Naive thymus-derived CD4-positive, alpha-beta T cell (primary cell): ENCODE measurements at regions of chr6 and their contacts with region 1.

Region 1: DNA sequence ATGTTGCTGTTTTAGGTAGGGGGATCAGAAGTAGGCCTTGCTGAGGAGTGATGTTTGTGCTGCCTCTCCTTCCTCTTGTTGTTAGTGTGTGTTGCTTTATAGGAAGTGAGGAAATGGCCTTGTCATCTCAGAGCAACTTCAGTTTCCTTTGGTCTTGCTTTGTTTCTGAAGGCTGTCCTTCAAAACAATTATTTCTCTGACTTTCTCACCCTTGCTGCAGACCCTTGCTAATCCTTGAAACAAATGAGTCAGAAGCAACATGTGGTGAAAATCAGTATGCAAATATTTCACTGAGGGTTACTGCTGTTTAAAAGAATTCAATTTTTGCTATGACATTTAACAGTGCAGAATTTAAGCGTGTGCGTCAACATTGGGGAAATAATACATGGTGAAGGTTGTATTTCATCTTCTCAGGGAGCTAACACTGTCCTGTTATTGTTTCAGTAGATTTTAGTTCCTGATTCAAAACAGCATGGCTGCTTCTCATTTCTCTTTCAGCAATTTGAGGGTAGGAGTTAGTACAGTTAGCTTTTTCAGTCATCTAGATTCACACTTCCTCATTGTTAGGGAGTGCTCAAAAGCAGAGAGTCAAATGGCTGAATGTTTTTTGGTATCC is 13.8 kb downstream of the RNF144B start:
- DNase-seq: peak in 2 of 9 donors; percentile 16 to 22
- ATAC-seq: peak; percentile 72
- H3K4me3 ChIP-seq: no peak overlapping the region
- H3K4me3 Mint-ChIP-seq: peak overlapping the region in 6 of 10 donors; percentile 18 to 55 (median 35)
- H3K27ac ChIP-seq: peak overlapping the region; percentile 22
- H3K27ac Mint-ChIP-seq: peak overlapping the region; percentile 1 to 91 (median 80)
- H3K4me1 ChIP-seq: peaks cover 0 to 15% of the 10 kb centered on the region in 2 donors
- H3K4me1 Mint-ChIP-seq: peaks cover 10 to 25% (median 17%) of the 10 kb centered on the region in 7 donors
- H3K27me3 ChIP-seq: no peaks in the 10 kb centered on the region
- H3K27me3 Mint-ChIP-seq: no peaks in the 10 kb centered on the region

Region 2: DNA sequence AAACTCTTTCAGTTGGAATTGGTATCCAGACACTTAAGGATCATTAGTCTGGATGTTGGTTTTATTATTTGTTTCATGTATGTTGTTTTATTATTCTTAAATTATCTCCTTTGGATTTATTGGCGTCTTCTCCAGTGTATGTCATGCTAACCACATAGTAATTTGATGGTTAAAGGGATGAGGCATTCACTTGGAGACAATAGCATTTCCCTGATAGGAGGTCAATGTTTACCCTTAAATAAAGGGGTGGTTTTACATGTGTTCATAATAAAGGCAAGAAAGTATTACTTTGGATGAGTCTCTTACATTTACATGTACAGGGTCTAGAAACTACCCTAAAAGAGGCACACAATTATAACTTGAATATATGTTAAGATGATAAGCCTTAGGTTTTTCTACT is 65.0 kb before region 1 on chr6:
- CTCF ChIA-PET with region 1: no interaction called
- POLR2A ChIA-PET with region 1: no interaction called
- intact Hi-C with region 1: no loop called
- DNase-seq: no peak
- ATAC-seq: no peak
- H3K4me3 ChIP-seq: no peak overlapping the region
- H3K4me3 Mint-ChIP-seq: no peak overlapping the region
- H3K27ac ChIP-seq: no peak overlapping the region
- H3K27ac Mint-ChIP-seq: no peak overlapping the region
- H3K4me1 ChIP-seq: no peaks in the 10 kb centered on the region
- H3K4me1 Mint-ChIP-seq: peaks cover 0 to 1% (median 0%) of the 10 kb centered on the region in 7 donors
- H3K27me3 ChIP-seq: no peaks in the 10 kb centered on the region
- H3K27me3 Mint-ChIP-seq: peaks cover 0 to 2% (median under 1%) of the 10 kb centered on the region in 5 donors

Region 3: DNA sequence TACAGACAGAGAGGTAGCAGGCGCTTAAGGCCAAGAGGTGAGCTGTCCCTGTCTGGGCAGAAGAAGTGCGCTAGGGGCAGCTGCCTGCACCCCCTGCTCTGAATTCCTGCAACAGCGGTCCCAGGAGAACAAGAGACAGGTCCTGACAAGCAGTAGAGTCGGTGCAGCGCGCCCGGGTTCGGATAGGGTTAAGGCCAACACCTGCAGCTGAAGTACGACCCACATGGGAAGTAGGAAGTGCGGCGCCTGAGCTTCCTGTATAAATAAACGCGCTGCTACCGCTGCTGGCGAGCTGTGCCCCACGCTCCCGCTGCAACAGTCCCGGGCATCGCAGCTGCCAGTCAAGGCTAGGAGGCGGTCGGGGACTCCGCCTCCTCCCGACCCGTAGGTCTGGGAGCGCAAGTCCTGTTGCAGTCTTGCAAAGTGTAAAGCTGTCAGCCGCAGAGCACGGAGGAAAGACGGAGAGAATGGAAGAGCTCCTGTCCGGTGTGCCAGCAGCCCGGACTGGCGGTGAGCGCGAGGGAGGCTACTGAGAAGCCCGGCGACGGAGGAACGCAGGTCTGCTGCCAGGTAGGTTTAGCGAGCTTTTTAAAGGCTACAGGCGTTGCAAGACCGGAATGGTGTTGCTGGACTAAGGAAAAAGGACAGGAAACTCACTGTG is 13.7 kb before region 1 on chr6 and contains the start of gene RNF144B:
- CTCF ChIA-PET with region 1: interaction called, 3 read pairs
- POLR2A ChIA-PET with region 1: interaction called, 3 read pairs
- intact Hi-C with region 1: loop called in 1 of 2 experiments (anchors 1 kb)
- DNase-seq: peak; percentile 41 to 73 (median 67)
- ATAC-seq: peak; percentile 92
- H3K4me3 ChIP-seq: peak within 1 kb of the TSS; percentile 70
- H3K4me3 Mint-ChIP-seq: peak within 1 kb of the TSS; percentile 90 to 100 (median 99)
- H3K27ac ChIP-seq: peak within 1 kb of the TSS; percentile 69
- H3K27ac Mint-ChIP-seq: peak within 1 kb of the TSS; percentile 2 to 95 (median 92)
- H3K4me1 ChIP-seq: peaks cover 4 to 18% of the 10 kb centered on the region in 2 donors
- H3K4me1 Mint-ChIP-seq: peaks cover 15 to 48% (median 35%) of the 10 kb centered on the region in 7 donors
- H3K27me3 ChIP-seq: no peaks in the 10 kb centered on the region
- H3K27me3 Mint-ChIP-seq: peaks cover 0 to 21% (median 0%) of the 10 kb centered on the region in 5 donors
- total RNA-seq, gene RNF144B: 1.5 to 23.5 (median 7.9) TPM

Region 4: GRCh38 chr6:18465410-18466154 is 64.6 kb after region 1 on chr6:
- CTCF ChIA-PET with region 1: no interaction called
- POLR2A ChIA-PET with region 1: no interaction called
- intact Hi-C with region 1: no loop called
- DNase-seq: no peak
- ATAC-seq: no peak
- H3K4me3 ChIP-seq: no peak overlapping the region
- H3K4me3 Mint-ChIP-seq: no peak overlapping the region
- H3K27ac ChIP-seq: no peak overlapping the region
- H3K27ac Mint-ChIP-seq: no peak overlapping the region
- H3K4me1 ChIP-seq: no peaks in the 10 kb centered on the region
- H3K4me1 Mint-ChIP-seq: peaks cover 0 to 2% (median 0%) of the 10 kb centered on the region in 7 donors
- H3K27me3 ChIP-seq: no peaks in the 10 kb centered on the region
- H3K27me3 Mint-ChIP-seq: no peaks in the 10 kb centered on the region

Region 5: GRCh38 chr6:18477301-18477941 is 76.5 kb after region 1 on chr6:
- CTCF ChIA-PET with region 1: no interaction called
- POLR2A ChIA-PET with region 1: no interaction called
- intact Hi-C with region 1: no loop called
- DNase-seq: no peak
- ATAC-seq: peak; percentile 24
- H3K4me3 ChIP-seq: no peak overlapping the region
- H3K4me3 Mint-ChIP-seq: no peak overlapping the region
- H3K27ac ChIP-seq: no peak overlapping the region
- H3K27ac Mint-ChIP-seq: no peak overlapping the region
- H3K4me1 ChIP-seq: no peaks in the 10 kb centered on the region
- H3K4me1 Mint-ChIP-seq: peaks cover 0 to 10% (median 6%) of the 10 kb centered on the region in 7 donors
- H3K27me3 ChIP-seq: no peaks in the 10 kb centered on the region
- H3K27me3 Mint-ChIP-seq: peaks cover 0 to 9% (median under 1%) of the 10 kb centered on the region in 5 donors